ENCODE measurements at regions of chr2 and their contacts with region 1.

Region 1: DNA sequence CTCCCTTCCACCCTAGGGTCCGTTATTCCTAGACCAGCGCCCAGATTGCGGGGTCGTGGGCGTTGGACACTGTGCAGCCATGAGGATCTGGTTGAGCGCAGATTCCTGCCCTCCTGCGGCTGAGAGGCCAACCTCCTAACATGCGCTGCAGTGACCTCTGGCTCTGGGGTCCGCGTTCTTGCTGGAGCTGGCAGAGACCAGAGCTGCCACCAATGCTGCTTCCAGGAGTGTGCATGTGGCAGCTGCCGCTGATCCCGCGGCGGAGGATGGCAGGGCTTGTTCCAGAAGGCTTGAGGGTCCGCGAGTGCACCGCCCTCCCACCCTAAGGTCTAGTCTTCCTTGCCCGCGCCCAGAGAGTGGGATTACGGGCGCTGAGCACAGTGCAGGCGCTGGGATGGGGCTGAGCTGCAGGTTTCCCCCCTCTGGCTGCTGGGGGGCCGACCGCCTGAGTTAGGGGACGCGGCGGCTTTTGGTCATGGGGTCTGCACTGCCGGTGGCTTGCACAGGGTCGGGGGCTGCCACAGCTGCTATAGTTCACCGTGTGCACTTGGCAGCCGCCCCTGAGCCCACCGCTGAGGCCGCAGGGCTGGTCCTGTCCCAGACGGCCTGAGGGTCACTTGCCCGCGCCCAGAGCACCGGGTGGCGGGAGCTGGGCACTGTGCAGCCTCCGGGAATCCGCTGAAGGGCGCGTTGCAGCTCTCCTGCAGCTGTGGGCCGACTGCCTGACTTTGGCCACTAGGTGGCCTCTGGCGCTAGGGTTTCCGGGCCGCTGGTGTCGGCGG is 145.9 kb downstream of the CCDC74A start:
- DNase-seq: peak; percentile 80
- ATAC-seq: peak; percentile 81
- H3K4me3 Mint-ChIP-seq: peak overlapping the region; percentile 66
- H3K27ac Mint-ChIP-seq: no peak overlapping the region
- H3K4me1 Mint-ChIP-seq: no peaks in the 10 kb centered on the region; the same call in 1 of the 2 replicates
- H3K27me3 Mint-ChIP-seq: peaks cover 44% of the 10 kb centered on the region
- CTCF ChIP-seq: peak; percentile 75; the same call in 1 of the 2 replicates

Region 2: DNA sequence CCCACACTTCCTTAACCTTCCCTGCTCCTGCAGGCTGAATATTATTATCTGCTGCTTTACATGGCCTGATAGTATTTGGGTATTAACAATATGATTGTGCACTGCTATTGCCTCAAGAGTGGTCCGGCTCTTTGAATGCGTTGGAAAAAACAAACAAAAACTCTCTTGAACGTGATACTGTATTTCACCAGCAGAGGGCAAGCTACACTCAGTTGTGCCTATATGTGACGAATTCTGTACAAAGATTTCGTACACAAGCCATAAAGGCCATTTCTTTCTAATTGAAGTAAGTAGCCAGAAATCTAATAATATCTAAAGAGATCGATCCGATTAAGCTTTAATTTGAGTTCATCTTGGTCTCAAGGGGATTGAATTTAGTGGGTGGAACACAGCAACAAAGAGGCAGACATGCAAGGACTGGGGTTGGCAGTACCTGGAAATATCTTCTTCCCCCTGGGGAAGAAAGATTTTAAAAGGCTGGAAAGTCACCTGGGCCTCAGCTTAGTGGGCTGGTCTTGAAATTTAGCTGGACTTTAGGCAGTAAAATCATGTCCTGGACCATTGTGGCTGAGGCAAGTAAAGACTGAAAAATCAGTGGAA is 260.3 kb before region 1 on chr2:
- CTCF ChIA-PET with region 1: interaction called, 14 read pairs
- POLR2A ChIA-PET with region 1: no interaction called
- DNase-seq: no peak
- ATAC-seq: peak; percentile 66
- H3K4me3 Mint-ChIP-seq: no peak overlapping the region
- H3K27ac Mint-ChIP-seq: no peak overlapping the region
- H3K4me1 Mint-ChIP-seq: no peaks in the 10 kb centered on the region; the same call in 1 of the 2 replicates
- H3K27me3 Mint-ChIP-seq: no peaks in the 10 kb centered on the region
- CTCF ChIP-seq: peak; percentile 59

Region 3: GRCh38 chr2:131659168-131659572 is 14.4 kb before region 1 on chr2:
- CTCF ChIA-PET with region 1: interaction called, 11 read pairs
- POLR2A ChIA-PET with region 1: no interaction called
- DNase-seq: no peak
- ATAC-seq: no peak
- H3K4me3 Mint-ChIP-seq: no peak overlapping the region
- H3K27ac Mint-ChIP-seq: no peak overlapping the region
- H3K4me1 Mint-ChIP-seq: 0 out of 2 replicates have a peak, but pooled peaks cover 5% of the 10 kb centered on the region
- H3K27me3 Mint-ChIP-seq: no peaks in the 10 kb centered on the region
- CTCF ChIP-seq: no peak

Region 4: DNA sequence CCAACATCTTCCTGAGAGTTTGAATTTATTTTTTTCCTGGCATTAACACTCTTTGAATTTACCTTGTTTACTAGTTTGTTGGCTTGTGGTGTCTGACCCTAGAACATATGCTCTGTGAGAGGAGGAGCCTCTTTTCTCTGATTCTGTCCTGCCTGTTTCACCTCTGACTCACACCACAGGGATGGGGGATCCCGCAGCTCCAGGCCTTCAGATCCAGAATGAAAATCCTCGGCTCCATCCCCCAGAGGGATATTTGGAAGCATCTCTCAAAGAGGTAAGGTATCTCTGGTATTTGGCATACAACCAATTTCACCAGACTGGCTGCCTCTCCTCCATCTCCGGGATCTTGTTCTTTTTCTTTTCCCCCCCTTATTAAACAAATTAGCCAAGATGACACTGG is 847.8 kb after region 1 on chr2:
- CTCF ChIA-PET with region 1: no interaction called
- POLR2A ChIA-PET with region 1: no interaction called
- DNase-seq: no peak
- ATAC-seq: no peak
- H3K4me3 Mint-ChIP-seq: no peak overlapping the region
- H3K27ac Mint-ChIP-seq: no peak overlapping the region
- H3K4me1 Mint-ChIP-seq: peaks cover 16% of the 10 kb centered on the region
- H3K27me3 Mint-ChIP-seq: no peaks in the 10 kb centered on the region
- CTCF ChIP-seq: no peak